ENCODE measurements at regions of chr10 and their contacts with region 1.

Region 1: GRCh38 chr10:119041326-119041725 is 11.8 kb downstream of the NANOS1 start:
- DNase-seq: no peak
- ATAC-seq: no peak
- H3K4me3 Mint-ChIP-seq: no peak overlapping the region
- H3K27ac Mint-ChIP-seq: no peak overlapping the region
- H3K4me1 Mint-ChIP-seq: no peaks in the 10 kb centered on the region
- H3K27me3 Mint-ChIP-seq: no peaks in the 10 kb centered on the region
- CTCF ChIP-seq: no peak

Region 2: DNA sequence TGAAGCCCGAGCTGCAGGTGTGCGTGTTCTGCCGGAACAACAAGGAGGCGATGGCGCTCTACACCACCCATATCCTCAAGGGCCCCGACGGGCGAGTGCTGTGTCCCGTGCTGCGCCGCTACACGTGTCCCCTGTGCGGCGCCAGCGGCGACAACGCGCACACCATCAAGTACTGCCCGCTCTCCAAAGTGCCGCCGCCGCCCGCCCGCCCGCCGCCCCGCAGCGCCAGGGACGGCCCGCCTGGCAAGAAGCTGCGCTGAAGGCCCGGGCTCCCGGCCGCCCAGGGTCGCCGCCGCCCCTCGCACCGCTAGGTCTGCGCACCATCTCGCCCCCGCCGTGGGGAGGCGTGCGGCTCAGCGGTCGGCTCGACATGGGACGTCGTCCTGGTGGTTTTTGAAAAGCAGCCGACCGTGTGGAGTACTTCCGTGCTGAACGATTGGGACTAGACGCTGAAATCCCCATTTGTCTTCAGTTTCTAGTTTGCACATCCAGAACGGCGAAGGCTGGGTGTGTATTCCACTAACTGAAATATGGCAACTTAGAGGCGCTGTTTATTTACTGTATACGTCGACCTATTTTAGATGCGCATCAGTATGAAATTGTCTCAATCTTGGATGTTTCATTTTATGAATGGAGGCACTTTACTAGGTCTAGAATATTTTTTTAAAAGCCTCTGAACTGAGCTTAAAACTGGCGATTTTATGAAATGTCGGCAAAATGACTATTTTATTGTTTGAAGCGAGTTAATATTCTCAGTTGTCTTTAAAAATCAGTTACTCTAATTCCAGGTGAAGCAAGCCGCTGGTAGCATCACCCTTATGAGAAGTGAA is 10.7 kb before region 1 on chr10:
- CTCF ChIA-PET with region 1: no interaction called
- POLR2A ChIA-PET with region 1: interaction called, 3 read pairs
- intact Hi-C with region 1: loop called (anchors 2 kb)
- DNase-seq: peak; percentile 72
- ATAC-seq: peak; percentile 80
- H3K4me3 Mint-ChIP-seq: peak overlapping the region; percentile 75
- H3K27ac Mint-ChIP-seq: peak overlapping the region; percentile 68
- H3K4me1 Mint-ChIP-seq: peaks cover 22% of the 10 kb centered on the region
- H3K27me3 Mint-ChIP-seq: peaks cover 23% of the 10 kb centered on the region
- CTCF ChIP-seq: no peak

Region 3: GRCh38 chr10:119061352-119061751 is 20.0 kb after region 1 on chr10:
- CTCF ChIA-PET with region 1: no interaction called
- POLR2A ChIA-PET with region 1: no interaction called
- intact Hi-C with region 1: loop called (anchors 2 kb)
- DNase-seq: no peak
- ATAC-seq: peak; percentile 42
- H3K4me3 Mint-ChIP-seq: no peak overlapping the region
- H3K27ac Mint-ChIP-seq: peak overlapping the region; percentile 59
- H3K4me1 Mint-ChIP-seq: peaks cover 19% of the 10 kb centered on the region
- H3K27me3 Mint-ChIP-seq: no peaks in the 10 kb centered on the region
- CTCF ChIP-seq: no peak